ENCODE measurements at regions of chr18 and their contacts with region 1.

Region 1: DNA sequence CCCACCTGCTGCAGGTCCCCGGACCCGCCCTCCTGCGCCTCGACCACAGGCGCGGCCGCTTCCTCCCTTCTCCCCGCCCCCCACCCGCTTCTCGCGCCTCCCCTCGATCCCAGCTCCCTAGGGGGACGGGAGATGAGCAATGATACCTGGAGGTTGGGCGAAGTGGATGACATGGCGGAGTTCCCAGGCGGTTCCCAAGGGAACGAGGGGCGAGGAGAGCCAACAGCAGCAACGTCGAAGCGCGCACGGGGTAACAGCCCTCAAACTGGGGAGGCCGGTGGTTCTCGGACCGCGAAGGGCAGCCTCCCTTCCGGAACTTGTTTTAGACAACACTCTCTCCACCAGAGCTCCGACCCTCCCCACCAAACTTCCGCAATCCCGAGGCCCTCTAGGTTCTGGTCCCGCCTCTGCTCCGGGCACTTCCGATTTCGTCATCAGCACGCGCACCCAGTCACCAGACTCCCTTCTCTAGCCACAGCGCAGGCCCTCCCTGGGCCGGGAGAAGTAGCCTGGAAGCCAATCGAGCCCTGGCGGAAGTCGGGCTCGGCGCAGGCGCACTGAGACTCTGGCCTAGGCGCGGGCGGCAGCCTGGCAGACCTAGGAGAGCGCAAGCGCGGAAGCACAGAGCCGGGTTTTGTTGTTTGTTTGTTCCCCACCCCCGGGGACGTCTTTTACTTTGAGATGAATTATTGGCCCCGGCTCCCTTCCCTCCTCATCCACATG is at the start of gene VPS4B:
- DNase-seq: peak; percentile 99 to 100 (median 99)
- H3K4me3 ChIP-seq: peak within 1 kb of the TSS; percentile 65 to 94 (median 77)
- H3K27ac ChIP-seq: peak within 1 kb of the TSS; percentile 45 to 97 (median 90)
- H3K4me1 ChIP-seq: peaks cover 8 to 15% of the 10 kb centered on the region in 2 donors
- H3K27me3 ChIP-seq: no peaks in the 10 kb centered on the region
- CTCF ChIP-seq: no peak
- POLR2A ChIP-seq: peak; percentile 63 to 80
- total RNA-seq, gene VPS4B: 15.0 to 58.5 (median 41.2) TPM

Region 2: GRCh38 chr18:63004466-63005089 is 417.7 kb before region 1 on chr18:
- intact Hi-C with region 1: loop called in 1 of 2 experiments (anchors 10 kb)
- DNase-seq: peak in 1 of 7 donors; percentile 35
- H3K4me3 ChIP-seq: no peak overlapping the region
- H3K27ac ChIP-seq: no peak overlapping the region
- H3K4me1 ChIP-seq: peaks cover 6% of the 10 kb centered on the region in 2 donors
- H3K27me3 ChIP-seq: no peaks in the 10 kb centered on the region
- CTCF ChIP-seq: no peak
- POLR2A ChIP-seq: no peak

Region 3: GRCh38 chr18:63199743-63200241 is 222.5 kb before region 1 on chr18:
- intact Hi-C with region 1: no loop called
- DNase-seq: no peak
- H3K4me3 ChIP-seq: peak overlapping the region in 1 of 4 donors; percentile 34
- H3K27ac ChIP-seq: no peak overlapping the region
- H3K4me1 ChIP-seq: no peaks in the 10 kb centered on the region
- H3K27me3 ChIP-seq: no peaks in the 10 kb centered on the region
- CTCF ChIP-seq: no peak
- POLR2A ChIP-seq: no peak

Region 4: DNA sequence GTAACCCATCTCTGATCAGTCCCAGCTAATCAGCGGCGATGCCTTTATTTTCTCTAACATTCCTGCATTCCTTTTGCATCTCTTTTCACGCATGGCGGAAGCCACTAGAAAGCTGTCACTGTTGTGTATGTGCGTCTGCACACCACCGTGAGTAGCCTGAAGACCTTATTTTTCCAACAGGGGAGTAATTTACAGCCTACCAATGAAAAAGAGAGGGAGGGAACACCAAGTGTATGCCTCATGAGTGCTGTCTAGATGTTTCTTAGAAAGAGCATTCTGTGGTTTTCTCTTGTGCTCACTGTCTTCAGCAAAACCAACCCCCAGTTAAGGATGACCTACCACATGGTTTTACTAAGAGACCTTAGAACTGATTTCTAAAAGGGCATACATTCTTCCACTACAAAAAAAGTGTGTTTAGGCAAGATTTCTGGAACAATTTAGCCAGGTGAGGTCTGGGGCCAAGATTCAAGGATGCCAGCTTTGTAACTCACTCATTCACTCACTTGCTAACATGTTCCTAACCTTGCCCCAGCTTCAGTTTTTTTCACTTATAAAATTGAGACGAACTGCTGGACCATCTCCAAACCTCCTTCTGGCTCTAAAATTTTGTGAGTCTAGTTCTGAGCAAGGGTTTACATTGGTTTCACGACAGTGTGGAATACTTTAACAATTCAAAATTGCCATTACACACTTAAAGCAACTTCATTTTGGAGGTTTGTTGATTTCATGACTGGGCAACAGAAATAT is 154.1 kb before region 1 on chr18:
- intact Hi-C with region 1: no loop called
- DNase-seq: no peak
- H3K4me3 ChIP-seq: no peak overlapping the region
- H3K27ac ChIP-seq: no peak overlapping the region
- H3K4me1 ChIP-seq: no peaks in the 10 kb centered on the region
- H3K27me3 ChIP-seq: no peaks in the 10 kb centered on the region
- CTCF ChIP-seq: no peak
- POLR2A ChIP-seq: no peak

Measured in adrenal gland (tissue), 19 donors.